Endothelial cell of umbilical vein (primary cell): ENCODE measurements at regions of chr2 and their contacts with region 1.

Region 1: DNA sequence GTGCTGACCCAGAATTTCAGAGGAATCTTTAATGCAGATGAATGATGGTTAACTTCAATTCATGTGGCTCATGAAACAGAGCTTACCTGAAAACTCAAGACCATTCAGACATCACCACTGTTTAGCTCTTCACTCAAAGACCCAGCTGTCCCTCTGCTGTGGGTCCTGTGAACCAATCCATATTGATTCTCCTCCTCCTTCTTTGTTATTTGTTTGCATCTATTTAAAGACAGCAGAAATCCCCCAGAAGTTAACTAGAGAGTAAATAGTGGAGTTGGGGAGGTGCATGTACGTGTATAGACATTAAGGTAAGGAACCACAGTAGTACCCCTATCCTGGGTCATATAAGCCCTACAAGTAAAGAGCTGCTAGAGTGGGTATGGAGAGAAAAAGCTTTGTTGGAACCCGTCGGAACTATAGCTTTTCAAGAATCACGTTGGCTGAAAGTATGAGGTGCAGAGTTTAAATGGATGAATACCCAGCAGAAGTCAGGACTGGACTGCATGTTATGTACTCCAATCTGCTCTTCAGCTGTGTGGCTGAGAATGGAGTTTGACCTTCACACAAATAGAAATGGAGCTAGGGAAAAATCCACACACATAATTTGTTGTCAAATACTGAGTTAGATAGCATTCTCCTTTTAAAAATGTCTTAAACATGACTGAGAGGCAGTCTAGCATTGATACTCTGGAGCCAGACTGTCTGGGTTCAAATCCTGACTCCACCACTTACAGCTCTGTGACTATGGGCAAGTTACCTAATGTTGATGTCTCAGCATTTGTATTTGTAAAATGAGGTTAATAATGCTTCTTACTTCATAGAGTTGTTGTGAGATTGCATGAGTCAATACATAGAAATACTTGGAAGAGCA is 81.7 kb upstream of the HK2 start:
- DNase-seq: no peak
- H3K4me3 ChIP-seq: no peak overlapping the region
- H3K27ac ChIP-seq: no peak overlapping the region
- H3K4me1 ChIP-seq: no peaks in the 10 kb centered on the region
- H3K27me3 ChIP-seq: peaks cover 2 to 15% of the 10 kb centered on the region in 2 experiments
- CTCF ChIP-seq: no peak
- POLR2A ChIP-seq: no peak

Region 2: DNA sequence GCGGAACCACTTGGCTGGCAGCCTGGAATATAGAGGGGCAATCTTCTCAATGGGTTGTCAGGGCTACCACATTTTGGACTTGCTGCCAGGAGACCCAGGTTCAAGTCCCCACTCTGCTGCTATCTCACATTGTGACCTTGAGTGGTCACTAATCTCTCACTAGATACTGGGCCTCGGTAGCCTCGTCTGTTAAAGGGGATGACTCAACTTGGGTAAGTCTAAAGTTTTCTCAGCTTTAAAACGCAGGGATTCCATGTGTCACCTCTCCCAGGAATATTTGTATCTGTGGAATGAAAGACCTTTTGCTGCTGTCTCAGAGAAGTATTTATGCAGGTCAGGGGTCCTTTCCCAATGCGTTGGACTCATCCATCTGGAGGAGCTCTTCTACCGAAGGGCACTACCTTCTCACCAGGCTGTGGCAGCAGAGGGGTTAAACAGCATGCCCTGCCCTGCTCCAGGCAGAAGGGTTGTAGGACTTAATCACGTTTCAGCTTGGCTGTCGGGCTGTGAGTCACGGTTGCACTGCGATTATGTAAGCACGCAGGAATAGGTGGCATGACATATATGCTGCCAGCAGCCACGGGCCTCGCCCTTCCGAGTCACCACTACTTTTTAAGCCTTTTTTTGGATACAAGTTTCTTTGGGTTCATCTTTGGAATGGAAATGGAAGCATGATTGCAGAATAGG is 11.7 kb before region 1 on chr2:
- CTCF ChIA-PET with region 1: interaction called, 5 read pairs
- POLR2A ChIA-PET with region 1: no interaction called
- dilution Hi-C with region 1: no loop called
- intact Hi-C with region 1: loop called (anchors 2 kb)
- DNase-seq: peak; percentile 77
- H3K4me3 ChIP-seq: no peak overlapping the region
- H3K27ac ChIP-seq: no peak overlapping the region
- H3K4me1 ChIP-seq: peaks cover 18% of the 10 kb centered on the region
- H3K27me3 ChIP-seq: no peaks in the 10 kb centered on the region
- CTCF ChIP-seq: no peak
- POLR2A ChIP-seq: no peak